ENCODE measurements at regions of chrX and their contacts with region 1.

Region 1: DNA sequence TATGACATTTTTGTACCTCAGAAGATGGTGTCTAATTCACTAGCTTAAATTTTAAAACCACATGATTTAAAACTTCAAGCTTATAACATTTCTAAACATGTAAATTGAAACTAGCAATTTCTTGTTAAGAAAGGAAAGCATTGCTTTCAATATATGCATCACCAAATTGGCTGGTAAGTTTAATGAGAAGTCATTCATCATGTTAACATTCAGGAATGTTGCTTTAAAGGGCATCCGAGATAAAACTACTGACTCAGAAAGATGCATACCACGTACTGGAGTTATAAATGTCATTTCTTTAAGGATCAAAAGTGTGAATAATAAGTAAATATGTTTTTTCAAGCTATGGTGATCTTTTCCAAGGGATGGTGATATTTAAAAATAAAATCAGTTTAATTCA is 83.3 kb upstream of the VCX2 start:
- DNase-seq: no peak
- H3K4me3 ChIP-seq: no peak overlapping the region
- H3K27ac ChIP-seq: no peak overlapping the region
- H3K4me1 ChIP-seq: no peaks in the 10 kb centered on the region
- H3K27me3 ChIP-seq: no peaks in the 10 kb centered on the region
- CTCF ChIP-seq: no peak
- POLR2A ChIP-seq: no peak

Region 2: GRCh38 chrX:8714164-8714563 is 459.8 kb after region 1 on chrX:
- intact Hi-C with region 1: loop called (anchors 5 kb)
- DNase-seq: no peak
- H3K4me3 ChIP-seq: no peak overlapping the region
- H3K27ac ChIP-seq: no peak overlapping the region
- H3K4me1 ChIP-seq: no peaks in the 10 kb centered on the region
- H3K27me3 ChIP-seq: no peaks in the 10 kb centered on the region
- CTCF ChIP-seq: no peak
- POLR2A ChIP-seq: no peak